CD8-positive, alpha-beta T cell (primary cell): ENCODE measurements at regions of chr14 and their contacts with region 1.

Region 1: DNA sequence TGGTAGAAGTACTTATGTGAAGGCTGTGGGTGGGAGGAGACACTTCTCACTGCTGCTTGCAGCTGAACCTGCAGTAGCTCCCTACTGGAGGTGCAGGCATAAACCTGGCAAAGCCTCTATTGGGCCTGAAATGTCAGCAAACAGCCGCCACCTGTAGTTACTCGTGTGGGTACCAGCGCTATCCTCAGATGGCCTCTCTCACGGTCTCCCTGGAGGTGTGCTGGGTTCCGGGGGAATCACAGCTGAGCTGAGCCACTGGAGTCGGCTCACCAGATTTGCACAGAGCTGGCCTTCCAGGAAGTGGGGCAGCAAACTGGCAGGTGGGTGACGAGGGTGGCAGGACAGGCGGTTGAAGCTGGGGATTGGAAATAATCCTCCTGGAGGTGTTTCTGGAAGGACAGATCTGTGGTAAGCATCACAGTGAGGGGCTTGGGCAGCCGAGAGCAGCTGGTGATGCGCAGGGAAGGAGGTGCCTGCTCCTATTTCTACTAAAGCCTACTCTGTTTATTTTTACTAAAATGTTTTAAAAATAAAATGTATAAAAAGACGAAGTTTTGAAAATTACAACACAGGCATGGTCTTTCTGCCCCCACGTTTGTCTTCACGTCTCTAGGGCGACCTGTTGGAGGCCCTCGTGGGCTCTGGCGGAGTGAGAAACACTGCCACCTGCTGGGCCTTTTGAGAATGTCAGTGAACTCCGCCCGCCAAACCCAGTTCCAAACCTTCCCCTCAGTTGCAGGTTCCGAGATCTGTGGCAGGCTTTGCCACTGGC is 67.8 kb upstream of the PLEKHG3 start:
- DNase-seq: peak; percentile 45 to 82 (median 73)
- ATAC-seq: peak; percentile 98
- H3K4me3 ChIP-seq: no peak overlapping the region
- H3K4me3 Mint-ChIP-seq: no peak overlapping the region
- H3K27ac ChIP-seq: no peak overlapping the region
- H3K27ac Mint-ChIP-seq: no peak overlapping the region
- H3K4me1 ChIP-seq: no peaks in the 10 kb centered on the region
- H3K4me1 Mint-ChIP-seq: peaks cover 3% of the 10 kb centered on the region
- H3K27me3 ChIP-seq: no peaks in the 10 kb centered on the region
- H3K27me3 Mint-ChIP-seq: peaks cover 4% of the 10 kb centered on the region
- CTCF ChIP-seq: peak; percentile 88

Region 2: GRCh38 chr14:64338616-64339316 is 297.6 kb before region 1 on chr14:
- CTCF ChIA-PET with region 1: interaction called, 56 read pairs
- POLR2A ChIA-PET with region 1: no interaction called
- intact Hi-C with region 1: no loop called
- DNase-seq: peak; percentile 54 to 93 (median 85)
- ATAC-seq: peak; percentile 79
- H3K4me3 ChIP-seq: peak overlapping the region; percentile 67 to 87
- H3K4me3 Mint-ChIP-seq: peak overlapping the region; percentile 97
- H3K27ac ChIP-seq: peak overlapping the region; percentile 38 to 58
- H3K27ac Mint-ChIP-seq: peak overlapping the region; percentile 96
- H3K4me1 ChIP-seq: peaks cover 19% of the 10 kb centered on the region
- H3K4me1 Mint-ChIP-seq: peaks cover 26% of the 10 kb centered on the region
- H3K27me3 ChIP-seq: no peaks in the 10 kb centered on the region
- H3K27me3 Mint-ChIP-seq: no peaks in the 10 kb centered on the region
- CTCF ChIP-seq: no peak

Region 3: GRCh38 chr14:64438181-64438841 is 198.1 kb before region 1 on chr14:
- CTCF ChIA-PET with region 1: interaction called, 14 read pairs
- POLR2A ChIA-PET with region 1: no interaction called
- intact Hi-C with region 1: no loop called
- DNase-seq: peak in 3 of 9 experiments; percentile 27 to 41 (median 31)
- ATAC-seq: peak; percentile 51
- H3K4me3 ChIP-seq: no peak overlapping the region
- H3K4me3 Mint-ChIP-seq: no peak overlapping the region
- H3K27ac ChIP-seq: no peak overlapping the region
- H3K27ac Mint-ChIP-seq: peak overlapping the region; percentile 21
- H3K4me1 ChIP-seq: no peaks in the 10 kb centered on the region
- H3K4me1 Mint-ChIP-seq: peaks cover 12% of the 10 kb centered on the region
- H3K27me3 ChIP-seq: no peaks in the 10 kb centered on the region
- H3K27me3 Mint-ChIP-seq: no peaks in the 10 kb centered on the region
- CTCF ChIP-seq: no peak

Region 4: DNA sequence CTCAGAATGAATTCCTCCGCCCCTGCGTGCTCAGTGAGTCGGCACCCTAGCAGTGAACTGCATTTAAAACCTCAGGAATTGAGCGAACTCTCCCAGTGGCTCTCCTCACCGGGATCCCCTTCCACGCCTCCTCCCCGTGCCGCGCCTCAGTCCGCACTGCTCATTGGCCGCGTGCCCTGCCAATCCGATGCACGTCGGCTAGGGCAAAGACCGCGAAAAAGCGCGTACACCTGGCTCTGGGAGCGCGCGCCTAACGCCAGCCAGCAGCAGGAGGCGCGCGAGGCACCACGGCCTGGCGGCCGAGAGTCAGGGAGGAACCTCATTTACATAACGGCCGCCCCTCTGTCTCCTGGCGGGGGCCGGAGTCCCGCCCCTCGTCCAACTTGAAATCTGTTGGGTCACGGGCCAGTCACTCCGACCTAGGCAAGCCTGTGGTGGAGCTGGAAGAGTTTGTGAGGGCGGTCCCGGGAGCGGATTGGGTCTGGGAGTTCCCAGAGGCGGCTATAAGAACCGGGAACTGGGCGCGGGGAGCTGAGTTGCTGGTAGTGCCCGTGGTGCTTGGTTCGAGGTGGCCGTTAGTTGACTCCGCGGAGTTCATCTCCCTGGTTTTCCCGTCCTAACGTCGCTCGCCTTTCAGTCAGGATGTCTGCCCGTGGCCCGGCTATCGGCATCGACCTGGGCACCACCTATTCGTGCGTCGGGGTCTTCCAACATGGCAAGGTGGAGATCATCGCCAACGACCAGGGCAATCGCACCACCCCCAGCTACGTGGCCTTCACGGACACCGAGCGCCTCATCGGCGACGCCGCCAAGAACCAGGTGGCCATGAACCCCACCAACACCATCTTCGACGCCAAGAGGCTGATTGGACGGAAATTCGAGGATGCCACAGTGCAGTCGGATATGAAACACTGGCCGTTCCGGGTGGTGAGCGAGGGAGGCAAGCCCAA is 95.9 kb before region 1 on chr14 and contains the start of gene HSPA2:
- CTCF ChIA-PET with region 1: interaction called, 7 read pairs
- POLR2A ChIA-PET with region 1: no interaction called
- intact Hi-C with region 1: loop called (anchors 1 to 5 kb)
- DNase-seq: peak; percentile 85 to 98 (median 93)
- ATAC-seq: peak; percentile 87
- H3K4me3 ChIP-seq: peak within 1 kb of the TSS; percentile 83 to 90
- H3K4me3 Mint-ChIP-seq: peak within 1 kb of the TSS; percentile 96
- H3K27ac ChIP-seq: peak within 1 kb of the TSS; percentile 42 to 56
- H3K27ac Mint-ChIP-seq: peak within 1 kb of the TSS; percentile 84
- H3K4me1 ChIP-seq: peaks cover 19% of the 10 kb centered on the region
- H3K4me1 Mint-ChIP-seq: peaks cover 26% of the 10 kb centered on the region
- H3K27me3 ChIP-seq: no peaks in the 10 kb centered on the region
- H3K27me3 Mint-ChIP-seq: no peaks in the 10 kb centered on the region
- CTCF ChIP-seq: peak; percentile 63
- total RNA-seq, gene HSPA2: 2.1 to 2.6 TPM

Region 5: GRCh38 chr14:64612021-64612380 is 24.4 kb before region 1 on chr14:
- CTCF ChIA-PET with region 1: interaction called, 18 read pairs
- POLR2A ChIA-PET with region 1: no interaction called
- intact Hi-C with region 1: no loop called
- DNase-seq: no peak
- ATAC-seq: no peak
- H3K4me3 ChIP-seq: no peak overlapping the region
- H3K4me3 Mint-ChIP-seq: no peak overlapping the region
- H3K27ac ChIP-seq: no peak overlapping the region
- H3K27ac Mint-ChIP-seq: no peak overlapping the region
- H3K4me1 ChIP-seq: no peaks in the 10 kb centered on the region
- H3K4me1 Mint-ChIP-seq: no peaks in the 10 kb centered on the region
- H3K27me3 ChIP-seq: no peaks in the 10 kb centered on the region
- H3K27me3 Mint-ChIP-seq: no peaks in the 10 kb centered on the region
- CTCF ChIP-seq: no peak

Region 6: GRCh38 chr14:64625475-64626269 is 10.7 kb before region 1 on chr14:
- CTCF ChIA-PET with region 1: interaction called, 29 read pairs
- POLR2A ChIA-PET with region 1: interaction called, 3 read pairs
- intact Hi-C with region 1: no loop called
- DNase-seq: no peak
- ATAC-seq: no peak
- H3K4me3 ChIP-seq: no peak overlapping the region
- H3K4me3 Mint-ChIP-seq: no peak overlapping the region
- H3K27ac ChIP-seq: no peak overlapping the region
- H3K27ac Mint-ChIP-seq: no peak overlapping the region
- H3K4me1 ChIP-seq: no peaks in the 10 kb centered on the region
- H3K4me1 Mint-ChIP-seq: no peaks in the 10 kb centered on the region
- H3K27me3 ChIP-seq: no peaks in the 10 kb centered on the region
- H3K27me3 Mint-ChIP-seq: peaks cover 5% of the 10 kb centered on the region
- CTCF ChIP-seq: no peak

Region 7: DNA sequence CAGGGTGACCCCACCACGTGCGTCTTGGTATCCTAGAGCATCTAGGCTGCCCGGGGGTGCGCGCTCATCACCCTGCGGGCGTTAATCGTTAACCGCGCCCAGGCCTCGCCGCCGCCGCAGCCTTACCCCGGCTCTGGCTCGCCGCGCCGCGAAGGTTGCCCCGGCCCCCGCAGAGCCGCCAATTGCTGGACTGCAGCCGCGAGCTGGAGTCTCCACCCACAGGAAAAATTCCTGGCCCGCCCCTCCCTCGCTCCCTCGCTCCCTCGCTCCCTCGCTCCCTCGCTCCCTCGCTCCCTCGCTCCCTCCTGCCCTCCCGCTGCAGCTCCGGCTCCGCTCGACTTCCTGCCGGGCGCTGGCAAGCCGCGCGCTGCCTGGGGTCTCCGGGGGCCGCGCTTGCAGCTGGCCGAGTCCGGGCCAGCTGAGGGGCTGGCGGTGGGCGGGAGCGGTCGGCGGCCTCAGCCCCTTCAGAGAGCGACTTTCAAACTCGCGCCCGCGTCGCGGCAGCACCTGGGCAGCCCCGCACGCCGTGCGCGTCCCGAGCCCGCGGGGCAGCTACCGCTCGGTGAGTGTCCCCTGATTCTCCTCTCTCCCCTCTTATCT is 67.8 kb after region 1 on chr14 and contains the start of gene PLEKHG3:
- CTCF ChIA-PET with region 1: no interaction called
- POLR2A ChIA-PET with region 1: no interaction called
- intact Hi-C with region 1: no loop called
- DNase-seq: peak in 2 of 9 experiments; percentile 61 to 62
- ATAC-seq: peak; percentile 39
- H3K4me3 ChIP-seq: peak within 1 kb of the TSS; percentile 49 to 63
- H3K4me3 Mint-ChIP-seq: peak within 1 kb of the TSS; percentile 79
- H3K27ac ChIP-seq: peak within 1 kb of the TSS in 1 of 2 experiments; percentile 71
- H3K27ac Mint-ChIP-seq: peak within 1 kb of the TSS; percentile 73
- H3K4me1 ChIP-seq: peaks cover 42% of the 10 kb centered on the region
- H3K4me1 Mint-ChIP-seq: peaks cover 47% of the 10 kb centered on the region
- H3K27me3 ChIP-seq: peaks cover 2 to 10% of the 10 kb centered on the region in 2 experiments
- H3K27me3 Mint-ChIP-seq: peaks cover 57% of the 10 kb centered on the region
- CTCF ChIP-seq: no peak
- total RNA-seq, gene PLEKHG3: 2.5 to 2.7 TPM